Natural killer cell (primary cell): ENCODE measurements at regions of chr4 and their contacts with region 1.

Region 1: GRCh38 chr4:8198906-8199593 is at the start of gene SH3TC1:
- DNase-seq: peak; percentile 71 to 75
- ATAC-seq: peak; percentile 85 to 92 (median 91)
- H3K4me3 ChIP-seq: peak within 1 kb of the TSS; percentile 60
- H3K4me3 Mint-ChIP-seq: peak within 1 kb of the TSS; percentile 96
- H3K27ac ChIP-seq: peak within 1 kb of the TSS; percentile 66
- H3K27ac Mint-ChIP-seq: peak within 1 kb of the TSS; percentile 84 to 93
- H3K4me1 ChIP-seq: peaks cover 56% of the 10 kb centered on the region
- H3K4me1 Mint-ChIP-seq: peaks cover 23 to 53% of the 10 kb centered on the region in 2 donors
- H3K27me3 ChIP-seq: no peaks in the 10 kb centered on the region
- H3K27me3 Mint-ChIP-seq: peaks cover 0 to 3% of the 10 kb centered on the region in 2 donors
- CTCF ChIP-seq: no peak
- total RNA-seq, gene SH3TC1: 50.1 to 61.7 (median 54.9) TPM

Region 2: GRCh38 chr4:8158710-8159536 is 40.1 kb before region 1 on chr4 and contains the start of gene ABLIM2:
- intact Hi-C with region 1: loop called (anchors 2 kb)
- DNase-seq: peak; percentile 99
- ATAC-seq: peak; percentile 99 to 100 (median 99)
- H3K4me3 ChIP-seq: peak within 1 kb of the TSS; percentile 64
- H3K4me3 Mint-ChIP-seq: peak within 1 kb of the TSS; percentile 99
- H3K27ac ChIP-seq: no peak within 1 kb of the TSS
- H3K27ac Mint-ChIP-seq: peak within 1 kb of the TSS; percentile 83 to 94
- H3K4me1 ChIP-seq: peaks cover 24% of the 10 kb centered on the region
- H3K4me1 Mint-ChIP-seq: peaks cover 15 to 19% of the 10 kb centered on the region in 2 donors
- H3K27me3 ChIP-seq: peaks cover 12% of the 10 kb centered on the region
- H3K27me3 Mint-ChIP-seq: peaks cover 0 to 14% of the 10 kb centered on the region in 2 donors
- CTCF ChIP-seq: no peak
- total RNA-seq, gene ABLIM2: 0.71 to 2.8 (median 1.3) TPM

Region 3: GRCh38 chr4:8176547-8177399 is 22.3 kb before region 1 on chr4:
- intact Hi-C with region 1: loop called (anchors 2 kb)
- DNase-seq: peak in 1 of 2 donors; percentile 67
- ATAC-seq: peak; percentile 64 to 98 (median 93)
- H3K4me3 ChIP-seq: no peak overlapping the region
- H3K4me3 Mint-ChIP-seq: no peak overlapping the region
- H3K27ac ChIP-seq: no peak overlapping the region
- H3K27ac Mint-ChIP-seq: no peak overlapping the region
- H3K4me1 ChIP-seq: peaks cover 6% of the 10 kb centered on the region
- H3K4me1 Mint-ChIP-seq: peaks cover 0 to 5% of the 10 kb centered on the region in 2 donors
- H3K27me3 ChIP-seq: no peaks in the 10 kb centered on the region
- H3K27me3 Mint-ChIP-seq: peaks cover 0 to under 1% of the 10 kb centered on the region in 2 donors
- CTCF ChIP-seq: peak; percentile 75